ENCODE measurements at regions of chr19 and their contacts with region 1.

Region 1: DNA sequence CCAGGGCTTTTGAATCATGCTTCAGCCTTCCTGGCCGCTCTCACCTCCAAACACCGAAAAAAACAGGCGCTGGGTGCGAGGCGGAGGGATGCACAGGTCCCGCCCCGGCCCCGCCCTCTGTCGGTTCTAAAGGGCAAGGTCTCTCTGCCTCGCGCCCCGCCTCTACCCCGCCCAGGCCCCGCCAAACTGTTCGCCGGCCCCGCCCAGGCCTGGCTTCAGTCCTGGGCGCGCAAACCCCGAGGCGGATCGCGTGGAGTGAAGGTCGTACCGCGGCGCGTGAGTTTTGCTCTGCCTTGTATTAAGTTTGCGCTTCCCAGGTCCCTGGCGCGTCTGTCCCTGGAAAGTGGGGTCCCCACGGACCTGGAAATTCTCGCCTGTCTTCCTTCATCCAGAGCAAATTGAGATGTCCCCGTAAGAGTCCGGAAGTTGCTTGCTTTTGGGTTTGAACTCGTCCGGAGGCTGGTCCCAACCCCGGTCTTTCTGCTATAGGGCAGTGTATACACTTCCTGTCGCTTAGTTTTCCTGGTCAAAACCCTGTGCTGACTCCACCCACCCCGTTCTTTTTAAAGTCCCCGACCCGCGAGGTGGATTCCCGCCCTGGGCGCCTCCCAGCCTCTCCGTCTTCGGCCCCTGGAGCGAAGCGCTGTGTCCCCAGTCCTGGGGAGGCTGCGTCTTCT is 8.4 kb downstream of the ZNF808 start:
- DNase-seq: peak; percentile 90
- ATAC-seq: peak; percentile 99
- H3K4me3 ChIP-seq: peak overlapping the region; percentile 71 to 86 (median 76)
- H3K4me3 Mint-ChIP-seq: peak overlapping the region; percentile 95
- H3K27ac ChIP-seq: peak overlapping the region; percentile 45 to 77
- H3K27ac Mint-ChIP-seq: peak overlapping the region; percentile 90
- H3K4me1 ChIP-seq: peaks cover 2 to 18% of the 10 kb centered on the region in 2 donors
- H3K4me1 Mint-ChIP-seq: peaks cover 31% of the 10 kb centered on the region
- H3K27me3 ChIP-seq: no peaks in the 10 kb centered on the region
- H3K27me3 Mint-ChIP-seq: no peaks in the 10 kb centered on the region
- CTCF ChIP-seq: peak; percentile 29

Region 2: GRCh38 chr19:52554216-52554971 is 18.5 kb after region 1 on chr19:
- CTCF ChIA-PET with region 1: no interaction called
- POLR2A ChIA-PET with region 1: no interaction called
- intact Hi-C with region 1: no loop called
- DNase-seq: no peak
- ATAC-seq: no peak
- H3K4me3 ChIP-seq: no peak overlapping the region
- H3K4me3 Mint-ChIP-seq: no peak overlapping the region
- H3K27ac ChIP-seq: no peak overlapping the region
- H3K27ac Mint-ChIP-seq: no peak overlapping the region
- H3K4me1 ChIP-seq: no peaks in the 10 kb centered on the region
- H3K4me1 Mint-ChIP-seq: no peaks in the 10 kb centered on the region
- H3K27me3 ChIP-seq: no peaks in the 10 kb centered on the region
- H3K27me3 Mint-ChIP-seq: no peaks in the 10 kb centered on the region
- CTCF ChIP-seq: no peak

Region 3: GRCh38 chr19:52601025-52601973 is 65.4 kb after region 1 on chr19:
- CTCF ChIA-PET with region 1: no interaction called
- POLR2A ChIA-PET with region 1: no interaction called
- intact Hi-C with region 1: loop called (anchors 2 kb)
- DNase-seq: peak; percentile 92
- ATAC-seq: peak; percentile 99
- H3K4me3 ChIP-seq: peak overlapping the region; percentile 59 to 89 (median 82)
- H3K4me3 Mint-ChIP-seq: peak overlapping the region; percentile 90
- H3K27ac ChIP-seq: peak overlapping the region; percentile 43 to 62
- H3K27ac Mint-ChIP-seq: peak overlapping the region; percentile 87
- H3K4me1 ChIP-seq: peaks cover 11 to 16% of the 10 kb centered on the region in 2 donors
- H3K4me1 Mint-ChIP-seq: peaks cover 25% of the 10 kb centered on the region
- H3K27me3 ChIP-seq: no peaks in the 10 kb centered on the region
- H3K27me3 Mint-ChIP-seq: no peaks in the 10 kb centered on the region
- CTCF ChIP-seq: peak; percentile 61